T-cell (primary cell): ENCODE measurements at regions of chr14 and their contacts with region 1.

Region 1: GRCh38 chr14:63891148-63891975 is 38.6 kb downstream of the SYNE2 start:
- DNase-seq: no peak
- ATAC-seq: no peak
- H3K4me3 ChIP-seq: no peak overlapping the region
- H3K4me3 Mint-ChIP-seq: no peak overlapping the region
- H3K27ac ChIP-seq: no peak overlapping the region
- H3K27ac Mint-ChIP-seq: peak overlapping the region in 1 of 2 donors; percentile 45
- H3K4me1 ChIP-seq: peaks cover 0 to 7% of the 10 kb centered on the region in 2 experiments
- H3K4me1 Mint-ChIP-seq: peaks cover 10 to 51% (median 46%) of the 10 kb centered on the region in 3 donors
- H3K27me3 ChIP-seq: no peaks in the 10 kb centered on the region
- H3K27me3 Mint-ChIP-seq: no peaks in the 10 kb centered on the region

Region 2: GRCh38 chr14:63777024-63777423 is 114.3 kb before region 1 on chr14:
- CTCF ChIA-PET with region 1: no interaction called
- POLR2A ChIA-PET with region 1: no interaction called
- DNase-seq: no peak
- ATAC-seq: no peak
- H3K4me3 ChIP-seq: no peak overlapping the region
- H3K4me3 Mint-ChIP-seq: no peak overlapping the region
- H3K27ac ChIP-seq: no peak overlapping the region
- H3K27ac Mint-ChIP-seq: no peak overlapping the region
- H3K4me1 ChIP-seq: no peaks in the 10 kb centered on the region
- H3K4me1 Mint-ChIP-seq: no peaks in the 10 kb centered on the region
- H3K27me3 ChIP-seq: no peaks in the 10 kb centered on the region
- H3K27me3 Mint-ChIP-seq: no peaks in the 10 kb centered on the region

Region 3: DNA sequence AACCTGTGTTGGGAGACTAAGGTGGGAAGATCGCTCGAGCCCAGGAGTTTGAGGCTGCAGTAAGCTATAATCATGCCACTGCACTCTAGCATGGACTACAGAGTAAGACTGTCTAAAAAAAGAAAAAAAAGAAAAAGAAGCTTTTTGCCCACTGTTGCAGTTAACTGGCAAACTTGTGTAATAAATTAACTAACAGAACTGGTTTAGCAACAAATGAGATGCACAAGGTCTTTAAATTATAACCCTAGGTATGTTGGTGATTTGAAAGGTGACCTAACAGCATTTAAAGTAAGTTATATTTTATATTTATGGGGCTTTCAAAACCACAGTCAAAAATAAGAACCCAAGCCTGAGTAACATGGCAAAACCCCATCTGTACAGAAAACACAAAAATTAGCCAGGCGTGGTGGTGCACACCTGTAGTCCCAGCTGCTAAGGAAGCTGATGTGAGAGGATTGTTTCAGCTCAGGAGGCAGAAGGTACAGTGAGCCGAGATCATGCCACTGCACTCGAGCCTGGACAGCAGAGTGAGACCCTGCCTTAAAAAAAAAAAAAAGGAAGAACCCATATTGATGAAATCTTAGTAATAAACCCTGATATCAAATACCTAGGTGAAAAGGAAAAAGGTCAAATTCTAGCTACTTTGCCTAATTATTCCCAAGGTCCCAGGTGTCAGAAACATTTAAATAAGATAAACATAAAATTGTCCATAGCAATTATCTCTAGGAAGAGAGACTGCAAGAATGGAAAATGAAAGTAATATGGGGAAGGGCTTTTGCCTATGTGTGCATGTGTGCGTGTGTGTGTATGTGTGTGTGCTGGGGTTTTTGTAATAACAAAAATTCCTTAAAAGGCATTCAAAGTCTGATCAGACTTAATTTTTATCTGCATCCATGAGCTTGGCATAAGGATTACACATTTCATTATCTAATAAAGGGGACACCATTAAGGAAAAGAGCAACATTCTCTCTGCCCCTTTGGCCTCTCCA is 23.1 kb before region 1 on chr14:
- CTCF ChIA-PET with region 1: no interaction called
- POLR2A ChIA-PET with region 1: interaction called, 4 to 10 read pairs
- DNase-seq: peak in 11 of 35 experiments; percentile 3 to 58 (median 10)
- ATAC-seq: no peak
- H3K4me3 ChIP-seq: no peak overlapping the region
- H3K4me3 Mint-ChIP-seq: peak overlapping the region; percentile 37 to 66 (median 65)
- H3K27ac ChIP-seq: peak overlapping the region; percentile 52
- H3K27ac Mint-ChIP-seq: peak overlapping the region; percentile 93 to 100
- H3K4me1 ChIP-seq: peaks cover 17 to 56% of the 10 kb centered on the region in 2 experiments
- H3K4me1 Mint-ChIP-seq: peaks cover 72 to 79% (median 73%) of the 10 kb centered on the region in 3 donors
- H3K27me3 ChIP-seq: no peaks in the 10 kb centered on the region
- H3K27me3 Mint-ChIP-seq: no peaks in the 10 kb centered on the region